ENCODE measurements at regions of chr19 and their contacts with region 1.

Region 1: DNA sequence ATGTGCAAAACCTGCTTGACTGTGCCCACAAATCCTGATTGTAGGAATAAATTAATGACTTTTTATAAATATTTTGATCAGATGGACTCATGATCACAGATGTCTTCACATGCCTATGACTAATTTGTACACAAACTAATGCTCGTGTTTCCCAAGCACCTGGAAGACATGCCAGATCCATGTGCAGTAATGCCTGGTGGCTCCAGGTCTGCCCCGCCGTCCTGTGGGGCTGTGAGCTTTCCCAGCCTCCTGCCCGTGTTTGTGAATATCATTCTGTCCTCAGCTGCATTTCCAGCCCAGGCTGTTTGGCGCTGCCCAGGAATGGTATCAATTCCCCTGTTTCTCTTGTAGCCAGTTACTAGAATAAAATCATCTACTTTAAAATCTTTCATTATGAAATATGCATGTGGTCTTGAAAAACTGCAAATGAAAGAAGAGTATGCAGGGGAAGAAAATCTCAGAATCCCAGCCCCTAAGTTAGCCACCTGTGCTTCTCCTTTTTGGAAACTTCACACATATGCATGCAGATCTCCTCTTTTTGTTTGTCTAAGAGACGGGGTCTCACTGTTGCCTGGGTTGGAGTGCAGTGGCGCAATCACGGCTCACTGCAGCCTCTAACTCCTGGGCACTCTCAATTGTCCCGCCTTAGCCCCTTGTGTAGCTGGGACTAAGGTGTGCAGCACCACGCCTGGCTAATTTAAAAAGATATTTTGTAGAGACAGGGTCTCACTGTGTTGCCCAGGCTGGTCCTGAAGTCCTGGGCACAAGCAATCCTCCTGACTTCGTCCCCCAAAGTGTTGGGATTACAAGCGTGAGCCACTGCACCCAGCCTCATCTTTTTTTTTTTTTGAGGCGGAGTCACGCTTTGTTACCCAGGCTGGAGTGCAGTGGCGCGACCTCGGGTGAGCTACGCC is 6.2 kb downstream of the RPL28 start:
- DNase-seq: no peak
- H3K4me3 ChIP-seq: no peak overlapping the region
- CTCF ChIP-seq: no peak

Region 2: GRCh38 chr19:55178781-55179599 is 213.0 kb before region 1 on chr19:
- in situ Hi-C with region 1: loop called (anchors 10 kb)
- DNase-seq: peak; percentile 72
- H3K4me3 ChIP-seq: peak overlapping the region; percentile 26
- CTCF ChIP-seq: no peak

Measured in astrocyte of the spinal cord (primary cell).